ENCODE measurements at regions of chr11 and their contacts with region 1.

Region 1: DNA sequence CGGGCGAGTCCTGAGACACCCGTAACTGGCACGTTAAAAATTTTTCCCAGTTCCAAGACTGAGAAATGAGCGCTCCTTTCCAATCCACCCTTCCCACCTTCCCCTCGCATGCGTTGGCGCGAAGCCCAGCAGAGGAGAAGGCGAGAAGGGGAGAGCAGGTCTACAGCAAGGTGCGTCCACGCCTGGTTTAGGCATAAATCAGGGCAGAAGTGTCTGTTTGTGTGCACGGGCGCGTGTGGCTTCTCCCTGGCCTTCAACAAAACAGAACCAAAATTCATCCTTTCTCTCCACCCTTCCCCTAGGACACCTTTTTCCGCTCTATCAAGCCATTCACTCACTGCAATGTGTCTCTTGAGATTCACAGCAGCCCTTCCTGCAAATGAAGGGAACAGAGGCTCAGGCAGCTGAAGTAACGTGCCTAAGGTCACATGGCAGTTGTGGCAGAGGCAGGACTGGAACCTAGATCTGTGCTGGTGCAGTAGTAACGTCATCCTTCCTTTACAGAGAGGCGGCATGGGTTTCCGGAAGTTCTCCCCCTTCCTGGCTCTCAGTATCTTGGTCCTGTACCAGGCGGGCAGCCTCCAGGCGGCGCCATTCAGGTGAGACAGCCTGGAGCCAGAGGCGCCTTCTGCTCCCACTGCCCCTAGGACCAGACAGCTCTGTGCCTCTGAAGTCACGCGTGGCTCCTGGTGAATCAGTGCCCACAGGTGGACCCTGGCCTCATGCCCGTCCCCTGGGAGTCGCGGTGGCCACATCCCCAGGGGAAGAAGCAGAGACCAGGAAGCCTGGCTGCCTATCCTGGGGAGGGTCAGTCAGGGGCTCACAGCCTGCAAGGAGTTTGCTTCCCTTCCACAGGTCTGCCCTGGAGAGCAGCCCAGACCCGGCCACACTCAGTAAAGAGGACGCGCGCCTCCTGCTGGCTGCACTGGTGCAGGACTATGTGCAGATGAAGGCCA is 1.1 kb downstream of the CALCB start:
- DNase-seq: peak; percentile 67
- ATAC-seq: peak; percentile 89
- H3K4me3 Mint-ChIP-seq: peak overlapping the region; percentile 61
- H3K27ac Mint-ChIP-seq: no peak overlapping the region
- H3K4me1 Mint-ChIP-seq: peaks cover 18% of the 10 kb centered on the region
- H3K27me3 Mint-ChIP-seq: peaks cover 34% of the 10 kb centered on the region
- CTCF ChIP-seq: peak; percentile 35

Region 2: GRCh38 chr11:14643697-14644225 is 430.7 kb before region 1 on chr11 and contains the start of gene PDE3B:
- CTCF ChIA-PET with region 1: no interaction called
- POLR2A ChIA-PET with region 1: interaction called, 3 read pairs
- intact Hi-C with region 1: loop called (anchors 10 kb)
- DNase-seq: peak; percentile 56
- ATAC-seq: peak; percentile 72
- H3K4me3 Mint-ChIP-seq: peak within 1 kb of the TSS; percentile 86
- H3K27ac Mint-ChIP-seq: no peak within 1 kb of the TSS
- H3K4me1 Mint-ChIP-seq: peaks cover 10% of the 10 kb centered on the region
- H3K27me3 Mint-ChIP-seq: peaks cover 17% of the 10 kb centered on the region
- CTCF ChIP-seq: no peak
- total RNA-seq, gene PDE3B: 11.3 and 13.4 TPM in 2 replicates

Region 3: GRCh38 chr11:14789879-14790484 is 284.5 kb before region 1 on chr11:
- CTCF ChIA-PET with region 1: interaction called, 30 read pairs
- POLR2A ChIA-PET with region 1: no interaction called
- intact Hi-C with region 1: loop called (anchors 1 kb)
- DNase-seq: no peak
- ATAC-seq: no peak
- H3K4me3 Mint-ChIP-seq: no peak overlapping the region
- H3K27ac Mint-ChIP-seq: no peak overlapping the region
- H3K4me1 Mint-ChIP-seq: no peaks in the 10 kb centered on the region
- H3K27me3 Mint-ChIP-seq: no peaks in the 10 kb centered on the region
- CTCF ChIP-seq: peak; percentile 33

Region 4: GRCh38 chr11:14974515-14975251 is 99.8 kb before region 1 on chr11:
- CTCF ChIA-PET with region 1: interaction called, 4 read pairs
- POLR2A ChIA-PET with region 1: no interaction called
- intact Hi-C with region 1: loop called (anchors 2 kb)
- DNase-seq: no peak
- ATAC-seq: peak; percentile 51
- H3K4me3 Mint-ChIP-seq: peak overlapping the region; percentile 62
- H3K27ac Mint-ChIP-seq: no peak overlapping the region
- H3K4me1 Mint-ChIP-seq: peaks cover 30% of the 10 kb centered on the region
- H3K27me3 Mint-ChIP-seq: peaks cover 62% of the 10 kb centered on the region
- CTCF ChIP-seq: no peak

Region 5: GRCh38 chr11:15169815-15170551 is 95.5 kb after region 1 on chr11:
- CTCF ChIA-PET with region 1: no interaction called
- POLR2A ChIA-PET with region 1: no interaction called
- intact Hi-C with region 1: no loop called
- DNase-seq: no peak
- ATAC-seq: no peak
- H3K4me3 Mint-ChIP-seq: no peak overlapping the region
- H3K27ac Mint-ChIP-seq: no peak overlapping the region
- H3K4me1 Mint-ChIP-seq: no peaks in the 10 kb centered on the region
- H3K27me3 Mint-ChIP-seq: peaks cover 29% of the 10 kb centered on the region
- CTCF ChIP-seq: no peak

Region 6: DNA sequence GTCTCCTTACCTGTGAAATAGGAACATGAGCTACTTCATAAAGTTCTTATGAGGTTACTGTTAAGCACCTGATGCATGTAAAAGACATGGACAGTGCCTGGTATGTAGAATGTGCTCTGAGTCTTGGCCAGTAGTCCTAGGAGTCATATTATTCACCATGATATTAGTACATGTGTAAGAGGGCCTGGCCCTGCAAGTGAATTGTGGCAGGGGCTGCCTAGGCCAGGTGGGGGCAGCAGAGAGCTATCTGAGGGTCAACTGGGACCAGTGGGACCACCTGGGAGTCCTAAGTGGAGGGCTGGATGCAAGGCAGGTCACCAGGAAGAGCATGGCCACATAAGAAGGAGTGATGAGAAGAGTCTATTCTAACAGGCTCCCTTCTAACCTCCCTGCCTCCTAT is 752.3 kb after region 1 on chr11:
- CTCF ChIA-PET with region 1: no interaction called
- POLR2A ChIA-PET with region 1: no interaction called
- intact Hi-C with region 1: no loop called
- DNase-seq: no peak
- ATAC-seq: no peak
- H3K4me3 Mint-ChIP-seq: no peak overlapping the region
- H3K27ac Mint-ChIP-seq: no peak overlapping the region
- H3K4me1 Mint-ChIP-seq: no peaks in the 10 kb centered on the region
- H3K27me3 Mint-ChIP-seq: peaks cover 3% of the 10 kb centered on the region
- CTCF ChIP-seq: no peak

Measured in activated B cell treated with CpG ODN at 0.5 μM for 24 hours (primary cell).